Right ventricle myocardium inferior (tissue), 1 donor: ENCODE measurements at regions of chr12 and their contacts with region 1.

Region 1: DNA sequence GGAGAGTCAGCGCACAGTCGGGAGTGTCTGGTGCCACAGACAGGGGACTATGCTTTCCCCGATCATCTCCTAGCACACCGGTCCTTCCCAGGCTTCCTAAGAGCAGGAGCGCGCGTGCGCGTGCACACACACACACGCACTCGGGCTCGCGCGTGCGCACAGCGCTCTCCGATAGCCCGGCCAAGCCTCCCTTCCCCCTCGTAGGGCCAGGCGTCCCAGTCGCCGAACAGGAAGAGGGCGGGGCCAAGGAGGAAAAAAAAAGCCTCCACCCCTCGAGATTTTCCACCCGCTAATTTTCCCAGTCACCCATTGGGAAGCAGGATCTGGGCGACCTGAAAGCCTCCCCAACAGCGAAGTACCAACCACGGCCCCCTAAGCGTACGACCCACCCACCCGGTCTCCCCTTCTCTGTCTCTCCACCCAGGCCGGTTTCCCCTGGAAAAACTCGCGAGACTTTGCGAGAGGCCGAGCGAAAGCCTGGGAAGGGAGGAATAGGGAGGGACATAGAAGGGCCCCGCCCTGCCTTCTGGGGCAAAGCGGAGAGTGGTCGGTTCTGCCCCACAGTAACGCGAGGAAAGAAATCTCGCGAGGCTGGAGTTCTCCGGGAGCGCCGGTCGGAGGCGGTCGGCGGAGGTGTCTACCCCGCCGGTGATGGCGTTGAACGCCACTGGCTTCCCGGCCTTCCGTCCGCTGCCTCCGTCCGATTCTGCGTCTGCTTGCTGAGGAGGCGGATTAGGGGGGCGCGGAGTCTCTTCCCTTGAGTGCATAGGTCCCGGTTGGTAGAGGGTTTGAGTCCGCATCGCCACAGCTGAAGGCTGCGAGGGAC is at the starts of genes FGFR1OP2 and INTS13:
- DNase-seq: peak; percentile 100
- ATAC-seq: peak; percentile 99
- total RNA-seq, gene FGFR1OP2: 30.6 TPM
- total RNA-seq, gene INTS13: 23.7 TPM

Region 2: DNA sequence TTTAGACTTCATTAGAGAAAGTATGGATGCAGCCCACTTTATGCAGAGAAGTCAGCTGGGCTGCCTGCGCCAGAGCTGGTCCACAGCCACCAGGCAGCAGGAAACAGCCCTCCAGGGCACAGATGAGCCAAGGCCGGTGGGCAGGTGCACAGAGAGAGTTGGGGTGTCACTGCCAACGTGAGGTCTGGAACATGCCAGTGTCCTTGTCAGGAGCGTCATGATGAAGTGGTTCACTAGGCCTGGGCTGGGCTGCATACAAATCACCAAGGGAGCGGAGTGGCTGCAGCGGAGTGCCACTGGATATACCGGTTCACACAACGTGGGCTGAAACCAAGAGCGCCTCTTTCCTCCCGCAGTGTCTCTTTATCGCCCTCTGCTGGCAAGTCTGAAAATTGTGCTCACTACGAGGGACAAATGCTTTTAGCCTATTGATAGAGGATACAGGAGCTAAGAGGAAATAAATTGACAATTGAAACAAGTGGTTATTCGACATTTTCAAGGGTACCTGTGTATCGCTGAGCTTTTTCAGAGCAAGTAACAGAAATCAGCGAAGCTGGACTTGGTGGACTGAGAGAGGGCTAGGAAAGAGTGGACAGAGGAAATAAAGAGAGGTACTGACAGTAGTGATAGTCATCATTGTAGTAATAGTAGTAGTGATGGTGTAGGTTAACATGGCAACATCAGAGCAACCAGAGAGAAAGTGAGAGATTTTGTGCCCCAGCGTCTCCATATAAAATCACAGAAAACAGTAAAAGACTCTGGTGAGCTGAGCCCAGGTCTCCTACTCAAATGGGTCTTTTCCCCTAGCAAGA is 53.1 kb before region 1 on chr12:
- intact Hi-C with region 1: no loop called
- DNase-seq: peak; percentile 88
- ATAC-seq: peak; percentile 94

Region 3: DNA sequence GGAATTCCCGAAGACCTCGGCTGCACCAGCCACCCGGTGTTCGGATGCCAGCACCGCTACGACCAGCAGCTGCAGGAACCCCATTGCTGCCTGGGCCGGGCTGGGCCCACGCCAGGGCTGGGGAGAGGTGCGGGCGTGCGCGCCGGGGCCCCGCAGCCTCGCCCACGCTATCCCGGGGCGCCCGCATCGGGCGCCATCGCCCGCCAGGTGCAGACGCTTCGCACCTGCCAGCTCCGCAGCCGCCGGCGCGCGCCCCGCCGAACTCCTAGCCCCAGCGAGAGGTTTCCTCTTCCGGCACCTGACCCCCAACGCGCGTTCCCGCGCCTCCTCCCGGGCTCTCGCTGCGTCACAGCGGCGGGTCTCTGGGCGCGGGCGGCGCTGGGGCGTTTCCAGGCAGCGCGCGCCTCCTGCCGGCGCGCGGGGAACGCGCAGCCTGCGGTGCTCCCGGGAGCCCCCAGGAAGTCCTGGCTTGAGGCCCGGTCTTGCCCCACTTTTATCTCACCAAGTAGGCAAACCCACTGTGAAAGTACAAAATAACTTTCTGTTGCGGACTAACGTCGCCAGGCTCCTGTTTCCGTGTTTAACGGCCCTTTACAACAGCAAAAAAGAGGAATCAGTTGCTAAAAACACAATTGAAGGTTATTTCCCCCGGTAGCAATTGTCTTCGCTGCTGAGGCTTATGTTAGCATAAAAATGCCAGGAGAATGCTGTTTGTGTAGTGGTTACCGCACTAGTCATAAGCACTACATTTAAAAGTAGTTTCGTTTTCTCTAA is 76.2 kb after region 1 on chr12 and contains the start of gene TM7SF3:
- intact Hi-C with region 1: loop called (anchors 1 kb)
- DNase-seq: peak; percentile 98
- ATAC-seq: peak; percentile 96
- total RNA-seq, gene TM7SF3: 22.3 TPM